Dorsolateral prefrontal cortex (tissue), 120 donors: ENCODE measurements at regions of chr10 and their contacts with region 1.

Region 1: DNA sequence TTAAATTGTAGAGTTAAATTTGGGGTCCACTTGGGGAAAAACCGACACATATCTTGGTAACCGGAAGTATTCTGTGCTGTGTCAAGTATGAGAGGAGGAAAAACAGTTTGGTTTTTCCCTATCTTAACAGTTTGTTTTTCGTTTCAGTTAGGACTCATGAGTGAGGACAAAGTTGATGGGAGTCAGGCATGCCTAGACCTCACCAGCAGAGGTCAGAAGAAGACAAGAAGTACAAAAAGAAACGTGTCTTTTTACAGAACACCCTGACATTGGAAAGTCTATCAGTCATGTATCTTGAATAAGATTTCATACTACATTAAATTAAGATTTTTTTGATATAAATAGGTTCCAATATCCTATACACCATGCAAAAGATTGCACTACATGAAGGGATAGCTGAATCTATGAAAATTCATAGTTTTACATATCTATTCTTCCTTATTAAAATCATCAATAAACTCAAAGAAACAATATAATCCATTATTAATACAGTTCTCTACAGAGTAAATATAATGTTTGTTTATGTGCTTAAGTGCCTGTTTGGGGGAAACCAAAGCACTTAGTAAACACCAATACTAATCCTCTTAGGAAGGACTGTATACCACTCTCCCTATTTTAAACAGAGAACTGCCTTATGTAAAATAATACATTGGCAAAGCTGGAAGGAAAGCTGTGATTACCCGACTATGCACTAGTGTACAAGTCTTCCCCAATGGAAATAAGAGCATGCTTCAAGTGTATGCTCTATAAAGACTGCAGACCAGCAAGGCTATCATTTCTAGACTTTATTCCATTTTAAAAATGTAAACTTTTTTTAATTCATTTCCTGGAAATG is 95.6 kb downstream of the USP6NL start:
- DNase-seq: peak in 3 of 10 donors; percentile 38 to 57 (median 56)
- H3K4me3 ChIP-seq: no peak overlapping the region
- H3K27ac ChIP-seq: no peak overlapping the region
- H3K27me3 ChIP-seq: no peaks in the 10 kb centered on the region
- CTCF ChIP-seq: peak; percentile 60 to 98 (median 90)

Region 2: DNA sequence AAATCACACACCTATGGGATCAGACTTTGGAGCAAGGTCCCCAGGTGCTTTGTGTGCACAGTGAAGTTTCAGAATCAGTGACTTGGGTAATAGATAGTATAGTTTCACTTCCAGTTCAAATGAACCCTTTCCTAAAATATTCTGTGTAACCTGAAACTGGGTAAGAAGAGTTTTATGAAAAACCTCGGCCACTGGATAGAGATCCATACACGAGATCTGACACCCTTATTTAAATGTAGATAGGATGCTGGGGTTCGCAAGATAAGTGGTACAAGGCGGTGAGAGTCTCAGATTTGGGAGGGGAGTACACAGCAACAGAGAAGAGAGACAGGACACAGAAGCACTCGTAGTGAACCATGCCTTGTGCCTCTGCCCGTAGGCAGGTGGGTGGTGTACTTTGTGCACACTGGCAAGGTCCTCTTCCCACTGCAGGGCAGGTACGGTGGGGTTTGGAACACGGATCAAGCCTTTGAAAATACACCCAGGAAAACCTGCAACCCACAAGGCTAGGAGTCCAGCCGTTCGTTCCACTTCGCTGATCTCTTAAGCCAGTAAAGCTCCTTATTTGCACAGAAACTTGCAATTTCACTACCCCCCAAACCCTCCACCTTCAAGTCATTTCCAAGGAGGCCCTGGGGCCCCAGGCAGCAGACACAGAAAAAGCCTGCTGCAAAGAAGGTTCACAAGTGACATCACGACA is 67.1 kb before region 1 on chr10:
- intact Hi-C with region 1: no loop called
- DNase-seq: no peak
- H3K4me3 ChIP-seq: no peak overlapping the region
- H3K27ac ChIP-seq: no peak overlapping the region
- H3K27me3 ChIP-seq: peaks cover 0 to 25% (median 0%) of the 10 kb centered on the region in 45 donors
- CTCF ChIP-seq: no peak

Region 3: DNA sequence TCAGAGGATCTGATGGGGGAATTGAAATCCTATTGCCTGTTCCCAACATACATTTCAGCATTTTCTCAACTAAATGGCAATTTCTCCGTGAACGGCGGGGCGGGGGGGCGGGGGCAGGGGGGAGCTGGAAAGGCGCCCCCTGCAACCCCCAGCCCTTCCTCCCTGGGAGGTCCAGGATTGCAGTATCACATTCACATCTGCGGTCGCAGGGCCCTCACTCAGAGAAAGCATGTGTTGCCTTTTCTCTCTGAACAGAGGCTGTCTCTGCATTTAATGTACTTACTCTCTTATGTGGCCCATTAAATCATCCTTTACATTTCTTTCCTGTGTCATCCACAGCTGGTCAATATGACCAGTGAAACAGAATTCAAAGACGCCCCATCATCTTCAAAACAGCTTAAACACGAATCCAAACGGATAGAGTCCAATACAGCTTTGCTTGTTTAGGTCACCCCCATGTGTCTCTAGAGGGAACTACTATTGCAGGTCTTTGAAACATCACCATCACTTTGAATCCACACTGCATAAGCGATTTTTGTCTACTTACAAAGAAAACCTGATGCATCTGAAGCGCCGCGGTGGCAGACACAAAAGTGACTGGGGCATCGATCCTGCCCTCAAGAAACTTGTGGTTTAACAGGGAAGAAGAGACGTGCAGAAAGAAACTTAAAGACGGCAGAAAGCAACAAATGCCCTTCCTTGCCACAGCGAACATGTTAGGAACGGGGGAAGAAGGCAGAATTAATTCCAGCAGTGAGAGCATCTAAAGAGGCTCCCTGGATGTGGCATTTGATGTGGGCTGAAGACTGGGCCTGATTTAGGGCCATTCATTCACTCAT is 209.3 kb after region 1 on chr10:
- intact Hi-C with region 1: loop called (anchors 5 kb)
- DNase-seq: no peak
- H3K4me3 ChIP-seq: peak overlapping the region in 1 of 59 donors; percentile 14
- H3K27ac ChIP-seq: no peak overlapping the region
- H3K27me3 ChIP-seq: no peaks in the 10 kb centered on the region
- CTCF ChIP-seq: peak; percentile 37 to 89 (median 75)

Region 4: GRCh38 chr10:11757821-11758463 is 242.1 kb after region 1 on chr10:
- intact Hi-C with region 1: loop called (anchors 2 kb)
- DNase-seq: peak; percentile 70 to 94 (median 88)
- H3K4me3 ChIP-seq: no peak overlapping the region
- H3K27ac ChIP-seq: peak overlapping the region in 19 of 59 donors; percentile 2 to 56 (median 25)
- H3K27me3 ChIP-seq: no peaks in the 10 kb centered on the region
- CTCF ChIP-seq: peak; percentile 57 to 95 (median 87)